ENCODE measurements at regions of chr12 and their contacts with region 1.

Region 1: DNA sequence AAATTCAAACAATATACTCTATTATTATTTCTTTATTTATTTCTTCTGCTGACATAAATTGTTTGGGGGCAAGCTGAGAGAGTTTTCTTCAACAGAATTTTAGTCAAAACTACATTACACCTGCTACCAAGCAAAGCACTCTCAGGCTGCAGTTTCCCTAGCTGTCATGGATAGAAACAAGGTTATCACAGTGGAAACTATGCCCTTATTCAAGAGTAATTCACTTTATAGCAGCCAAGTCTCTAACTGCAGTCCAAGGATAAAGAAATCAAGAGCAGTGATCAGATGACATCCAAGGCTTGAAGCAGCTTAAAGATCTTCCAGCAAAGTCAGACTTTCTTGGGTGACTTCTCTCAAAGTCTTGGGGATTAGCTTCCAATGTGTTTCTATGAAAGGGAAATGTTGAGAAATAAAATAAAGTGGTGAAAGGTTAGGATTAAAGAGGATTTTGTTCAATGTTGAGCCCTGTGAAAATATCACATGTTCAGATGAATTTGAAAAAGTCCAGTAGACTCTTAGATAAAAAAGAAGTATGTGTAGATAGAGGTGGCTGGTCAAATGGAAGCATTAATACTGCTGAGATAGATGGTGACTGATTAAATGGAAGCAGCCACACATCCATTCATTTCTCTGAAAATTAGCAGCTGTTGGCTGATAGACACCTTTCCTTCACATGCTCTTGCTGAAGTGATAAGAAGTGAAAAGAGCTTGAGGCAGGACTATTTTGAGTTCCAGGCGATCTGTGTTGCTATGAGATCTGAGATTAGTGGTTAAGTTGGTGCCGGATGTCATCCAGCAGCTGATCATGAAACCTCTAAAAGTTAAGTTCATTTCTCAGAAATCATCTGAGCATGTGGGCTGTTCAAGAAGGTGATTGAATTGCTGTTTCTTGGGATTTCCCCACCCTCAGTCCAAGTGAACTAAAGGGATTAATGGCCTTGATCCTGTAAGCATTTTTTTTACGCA is 257.8 kb upstream of the BTG1 start:
- DNase-seq: peak; percentile 93
- H3K4me3 Mint-ChIP-seq: peak overlapping the region; percentile 69
- H3K27ac Mint-ChIP-seq: peak overlapping the region; percentile 94
- H3K4me1 Mint-ChIP-seq: peaks cover 78% of the 10 kb centered on the region
- H3K27me3 Mint-ChIP-seq: no peaks in the 10 kb centered on the region

Region 2: DNA sequence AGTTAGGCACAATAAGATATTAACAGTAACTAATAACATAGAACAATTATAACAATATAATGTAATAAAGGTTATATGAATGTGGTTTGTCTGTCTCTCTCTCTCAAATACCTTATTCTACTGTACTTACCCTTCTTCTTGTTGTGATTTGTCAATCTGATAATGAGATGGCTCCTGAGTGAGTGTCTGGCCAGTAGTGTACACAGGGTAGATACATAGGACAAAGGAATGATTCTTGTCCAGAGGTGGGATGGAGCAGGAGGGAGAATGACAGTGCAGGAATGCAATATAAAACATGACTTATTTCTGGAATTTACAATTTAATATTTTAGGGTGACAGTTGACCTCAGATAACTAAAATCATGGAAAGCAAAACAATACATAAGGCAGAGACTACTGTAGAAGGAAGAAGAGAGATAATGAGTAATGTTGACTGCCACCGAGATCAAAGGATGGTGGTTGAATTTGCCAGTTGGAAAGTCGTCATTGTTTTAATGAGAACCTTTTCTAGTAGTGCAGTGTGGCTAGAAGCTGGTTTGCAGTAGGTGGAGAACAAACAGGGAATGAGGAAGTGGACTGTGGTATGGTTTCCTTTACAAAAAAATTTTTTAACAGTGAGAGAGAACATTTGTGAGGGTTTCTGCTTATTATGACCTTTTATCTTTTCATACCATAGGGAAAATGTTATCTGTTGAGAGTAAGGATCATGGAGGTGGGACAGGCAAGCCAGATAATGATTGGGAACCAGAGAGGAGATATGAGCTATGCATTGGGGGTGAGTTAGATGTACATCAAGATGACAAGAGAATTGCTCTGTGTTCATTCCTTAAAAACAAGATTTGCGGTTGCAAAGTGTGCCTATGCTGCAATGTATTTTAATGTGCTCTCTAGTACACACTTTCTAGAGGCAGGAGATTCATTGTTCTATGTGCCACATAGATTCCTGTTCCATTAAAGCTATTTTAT is 716.2 kb before region 1 on chr12:
- intact Hi-C with region 1: loop called (anchors 2 kb)
- DNase-seq: peak; percentile 78
- H3K4me3 Mint-ChIP-seq: peak overlapping the region; percentile 57
- H3K27ac Mint-ChIP-seq: peak overlapping the region; percentile 83
- H3K4me1 Mint-ChIP-seq: peaks cover 24% of the 10 kb centered on the region
- H3K27me3 Mint-ChIP-seq: no peaks in the 10 kb centered on the region

Region 3: GRCh38 chr12:92065018-92065499 is 338.4 kb before region 1 on chr12:
- intact Hi-C with region 1: loop called (anchors 5 kb)
- DNase-seq: peak; percentile 71
- H3K4me3 Mint-ChIP-seq: peak overlapping the region; percentile 35
- H3K27ac Mint-ChIP-seq: peak overlapping the region; percentile 87
- H3K4me1 Mint-ChIP-seq: peaks cover 38% of the 10 kb centered on the region
- H3K27me3 Mint-ChIP-seq: no peaks in the 10 kb centered on the region

Region 4: GRCh38 chr12:92208613-92209121 is 194.8 kb before region 1 on chr12:
- intact Hi-C with region 1: loop called (anchors 2 kb)
- DNase-seq: peak; percentile 82
- H3K4me3 Mint-ChIP-seq: peak overlapping the region; percentile 66
- H3K27ac Mint-ChIP-seq: peak overlapping the region; percentile 94
- H3K4me1 Mint-ChIP-seq: peaks cover 36% of the 10 kb centered on the region
- H3K27me3 Mint-ChIP-seq: no peaks in the 10 kb centered on the region

Region 5: DNA sequence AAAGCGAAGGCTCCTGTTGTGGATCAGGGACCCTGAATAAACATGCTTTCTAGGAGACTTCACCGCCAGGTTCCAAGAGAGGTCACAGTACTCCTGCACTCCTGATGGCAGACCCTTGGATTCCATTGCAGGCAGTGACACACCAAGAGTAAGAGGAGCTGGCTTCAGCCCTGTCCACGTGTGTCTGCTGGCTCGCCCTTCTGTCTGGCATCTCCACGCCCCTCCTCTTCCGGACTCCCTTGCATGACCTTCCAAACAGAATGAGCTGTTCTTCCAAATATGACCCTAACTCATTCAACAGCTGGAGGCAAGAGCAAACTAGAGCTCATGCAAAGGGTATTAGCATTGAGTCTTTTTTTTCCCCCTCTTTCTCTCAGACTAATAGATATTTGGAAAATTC is 66.3 kb after region 1 on chr12:
- intact Hi-C with region 1: loop called (anchors 1 kb)
- DNase-seq: no peak
- H3K4me3 Mint-ChIP-seq: no peak overlapping the region
- H3K27ac Mint-ChIP-seq: peak overlapping the region; percentile 66
- H3K4me1 Mint-ChIP-seq: peaks cover 26% of the 10 kb centered on the region
- H3K27me3 Mint-ChIP-seq: no peaks in the 10 kb centered on the region

Region 6: DNA sequence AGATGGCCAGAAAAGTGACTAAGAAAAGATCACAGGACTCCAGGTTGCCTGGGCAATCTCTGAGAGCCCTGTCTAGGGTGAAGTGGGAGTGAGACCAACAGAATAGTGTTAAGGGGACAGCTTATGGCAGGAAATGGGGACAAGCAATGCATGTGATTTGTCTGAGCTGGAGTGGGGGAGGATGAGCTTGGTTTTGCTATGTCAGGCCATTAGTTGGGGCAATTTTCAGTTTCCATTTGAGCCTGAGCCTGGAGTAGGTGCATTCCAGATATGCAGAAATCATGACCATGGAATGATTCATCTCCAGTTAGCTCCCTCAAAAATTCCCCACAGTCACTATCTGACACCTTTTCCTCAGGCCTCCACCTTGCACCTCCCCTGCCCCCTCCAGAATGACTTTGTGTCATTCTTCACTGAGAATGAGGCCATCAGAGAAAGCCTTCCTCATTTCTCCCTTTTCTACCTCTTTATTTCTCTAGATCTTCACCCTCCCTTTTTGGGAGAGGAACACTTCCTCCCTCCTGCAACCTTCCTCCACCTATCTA is 148.4 kb after region 1 on chr12:
- intact Hi-C with region 1: loop called (anchors 2 kb)
- DNase-seq: peak; percentile 71
- H3K4me3 Mint-ChIP-seq: no peak overlapping the region
- H3K27ac Mint-ChIP-seq: no peak overlapping the region
- H3K4me1 Mint-ChIP-seq: peaks cover 39% of the 10 kb centered on the region
- H3K27me3 Mint-ChIP-seq: no peaks in the 10 kb centered on the region

Region 7: DNA sequence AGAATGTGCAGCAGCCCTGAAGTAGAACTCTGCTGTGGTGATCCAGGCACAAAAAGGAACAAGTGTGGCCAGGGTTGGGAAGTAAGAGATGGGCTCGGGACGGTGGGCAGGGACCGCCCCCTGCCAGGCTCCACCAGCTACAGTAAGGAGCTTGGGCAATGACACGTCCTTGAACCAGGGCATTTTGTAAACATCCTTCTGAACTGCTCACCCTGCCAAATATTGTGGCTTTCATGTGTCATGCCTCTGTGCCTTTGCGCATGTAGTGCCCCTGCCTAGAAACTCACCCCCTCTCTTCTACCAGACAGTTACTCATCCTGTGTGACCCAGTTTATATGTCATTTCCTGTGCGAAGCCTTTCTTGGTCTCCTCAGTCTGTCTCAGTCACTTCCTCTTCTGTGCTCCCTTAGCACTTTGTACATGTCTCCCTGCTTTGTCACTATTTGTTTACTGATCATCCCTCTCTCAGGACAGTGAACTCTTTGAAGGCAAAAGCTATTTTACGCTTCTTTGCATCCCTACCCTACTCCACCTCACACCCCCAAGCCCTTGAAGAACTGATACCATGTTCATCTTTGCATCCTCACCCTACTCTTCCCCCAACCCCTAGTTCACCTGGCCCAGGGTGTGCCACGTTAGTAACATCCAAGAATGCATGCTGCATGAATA is 190.4 kb after region 1 on chr12:
- intact Hi-C with region 1: loop called (anchors 1 kb)
- DNase-seq: peak; percentile 92
- H3K4me3 Mint-ChIP-seq: peak overlapping the region; percentile 71
- H3K27ac Mint-ChIP-seq: peak overlapping the region; percentile 99
- H3K4me1 Mint-ChIP-seq: peaks cover 57% of the 10 kb centered on the region
- H3K27me3 Mint-ChIP-seq: no peaks in the 10 kb centered on the region

Measured in activated CD4-positive, alpha-beta T cell treated with anti-CD3 and anti-CD28 coated beads, Interleukin-2, amount 10 ng/mL, durations not matched to agents 24 days and 14 days (primary cell).